Heart right ventricle (tissue), 16 donors: ENCODE measurements at regions of chr5 and their contacts with region 1.

Region 1: GRCh38 chr5:132813599-132814502 is 749 bp downstream of the SOWAHA start:
- DNase-seq: peak in 1 of 2 donors; percentile 27
- ATAC-seq: peak in 7 of 8 donors; percentile 33 to 82 (median 73)
- H3K4me3 ChIP-seq: peak overlapping the region; percentile 5 to 49 (median 42)
- H3K27ac ChIP-seq: no peak overlapping the region
- H3K4me1 ChIP-seq: peaks cover 0 to 17% (median 7%) of the 10 kb centered on the region in 9 donors
- H3K27me3 ChIP-seq: peaks cover 6 to 72% (median 49%) of the 10 kb centered on the region in 7 donors
- CTCF ChIP-seq: peak in 1 of 9 donors; percentile 10

Region 2: GRCh38 chr5:132027027-132027426 is 786.8 kb before region 1 on chr5:
- intact Hi-C with region 1: no loop called
- DNase-seq: no peak
- ATAC-seq: no peak
- H3K4me3 ChIP-seq: no peak overlapping the region
- H3K27ac ChIP-seq: no peak overlapping the region
- H3K4me1 ChIP-seq: no peaks in the 10 kb centered on the region
- H3K27me3 ChIP-seq: peaks cover 0 to 15% (median 5%) of the 10 kb centered on the region in 7 donors
- CTCF ChIP-seq: no peak

Region 3: DNA sequence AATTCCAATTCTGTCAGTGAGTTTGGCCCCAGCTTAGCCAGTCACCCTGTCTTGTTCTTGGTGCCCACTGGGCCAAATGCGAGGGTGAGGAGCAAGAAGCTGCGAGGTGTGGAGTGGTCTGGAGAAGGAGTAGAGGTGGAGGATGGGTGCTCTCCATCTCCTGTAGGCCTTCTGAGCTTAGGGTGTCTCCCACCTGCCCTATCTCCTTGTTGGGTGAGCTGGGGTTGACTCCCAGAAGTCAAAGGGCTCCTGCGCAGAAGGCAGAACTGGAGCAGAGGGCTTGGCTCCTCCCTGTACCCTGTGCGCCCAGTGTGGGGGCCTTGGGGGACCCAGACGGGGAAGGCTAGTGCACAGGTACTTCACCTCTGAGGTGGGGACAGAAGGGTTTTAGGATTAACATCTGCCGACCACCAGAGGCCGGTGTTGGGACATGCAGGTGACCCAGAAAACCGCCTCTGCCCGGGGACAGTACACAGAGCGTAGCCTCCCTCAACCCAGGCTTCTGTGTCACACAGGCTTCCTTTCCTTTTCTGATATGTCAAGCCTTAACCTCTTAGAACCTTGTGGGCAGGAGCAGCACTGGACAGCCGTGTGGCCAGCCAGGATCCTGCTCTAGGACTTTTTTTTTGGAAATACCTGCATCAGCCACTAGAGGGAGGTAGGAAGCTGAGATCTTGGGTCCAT is 287.4 kb before region 1 on chr5:
- intact Hi-C with region 1: loop called in 2 of 10 experiments (anchors 10 kb)
- DNase-seq: peak; percentile 9 to 31
- ATAC-seq: peak; percentile 38 to 88 (median 74)
- H3K4me3 ChIP-seq: no peak overlapping the region
- H3K27ac ChIP-seq: no peak overlapping the region
- H3K4me1 ChIP-seq: peaks cover 0 to 6% (median 3%) of the 10 kb centered on the region in 9 donors
- H3K27me3 ChIP-seq: no peaks in the 10 kb centered on the region
- CTCF ChIP-seq: peak; percentile 66 to 89 (median 80)

Region 4: GRCh38 chr5:132753135-132753987 is 60.5 kb before region 1 on chr5:
- intact Hi-C with region 1: loop called in 5 of 10 experiments (anchors 5 to 10 kb)
- DNase-seq: no peak
- ATAC-seq: peak in 3 of 8 donors; percentile 6 to 41 (median 21)
- H3K4me3 ChIP-seq: no peak overlapping the region
- H3K27ac ChIP-seq: no peak overlapping the region
- H3K4me1 ChIP-seq: no peaks in the 10 kb centered on the region
- H3K27me3 ChIP-seq: peaks cover 0 to 3% (median 0%) of the 10 kb centered on the region in 7 donors
- CTCF ChIP-seq: peak in 3 of 9 donors; percentile 4 to 16 (median 10)

Region 5: GRCh38 chr5:132901730-132902129 is 87.9 kb after region 1 on chr5:
- intact Hi-C with region 1: no loop called
- DNase-seq: no peak
- ATAC-seq: no peak
- H3K4me3 ChIP-seq: no peak overlapping the region
- H3K27ac ChIP-seq: no peak overlapping the region
- H3K4me1 ChIP-seq: peaks cover 0 to 18% (median 2%) of the 10 kb centered on the region in 9 donors
- H3K27me3 ChIP-seq: no peaks in the 10 kb centered on the region
- CTCF ChIP-seq: no peak

Region 6: GRCh38 chr5:132927355-132928061 is 113.7 kb after region 1 on chr5:
- intact Hi-C with region 1: no loop called
- DNase-seq: no peak
- ATAC-seq: no peak
- H3K4me3 ChIP-seq: no peak overlapping the region
- H3K27ac ChIP-seq: no peak overlapping the region
- H3K4me1 ChIP-seq: peaks cover 0 to 19% (median 16%) of the 10 kb centered on the region in 9 donors
- H3K27me3 ChIP-seq: no peaks in the 10 kb centered on the region
- CTCF ChIP-seq: no peak